ENCODE measurements at regions of chr1 and their contacts with region 1.

Region 1: GRCh38 chr1:212782422-212783154 is 9.0 kb downstream of the NSL1 start:
- DNase-seq: no peak
- H3K4me3 ChIP-seq: no peak overlapping the region
- H3K27ac ChIP-seq: no peak overlapping the region
- H3K4me1 ChIP-seq: no peaks in the 10 kb centered on the region
- H3K27me3 ChIP-seq: no peaks in the 10 kb centered on the region
- CTCF ChIP-seq: peak; percentile 33 to 61 (median 51)

Region 2: GRCh38 chr1:212477014-212477679 is 305.4 kb before region 1 on chr1:
- intact Hi-C with region 1: loop called (anchors 5 kb)
- DNase-seq: peak; percentile 45 to 92
- H3K4me3 ChIP-seq: no peak overlapping the region
- H3K27ac ChIP-seq: no peak overlapping the region
- H3K4me1 ChIP-seq: peaks cover 0 to 15% of the 10 kb centered on the region in 2 donors
- H3K27me3 ChIP-seq: no peaks in the 10 kb centered on the region
- CTCF ChIP-seq: peak; percentile 80 to 89 (median 83)

Region 3: DNA sequence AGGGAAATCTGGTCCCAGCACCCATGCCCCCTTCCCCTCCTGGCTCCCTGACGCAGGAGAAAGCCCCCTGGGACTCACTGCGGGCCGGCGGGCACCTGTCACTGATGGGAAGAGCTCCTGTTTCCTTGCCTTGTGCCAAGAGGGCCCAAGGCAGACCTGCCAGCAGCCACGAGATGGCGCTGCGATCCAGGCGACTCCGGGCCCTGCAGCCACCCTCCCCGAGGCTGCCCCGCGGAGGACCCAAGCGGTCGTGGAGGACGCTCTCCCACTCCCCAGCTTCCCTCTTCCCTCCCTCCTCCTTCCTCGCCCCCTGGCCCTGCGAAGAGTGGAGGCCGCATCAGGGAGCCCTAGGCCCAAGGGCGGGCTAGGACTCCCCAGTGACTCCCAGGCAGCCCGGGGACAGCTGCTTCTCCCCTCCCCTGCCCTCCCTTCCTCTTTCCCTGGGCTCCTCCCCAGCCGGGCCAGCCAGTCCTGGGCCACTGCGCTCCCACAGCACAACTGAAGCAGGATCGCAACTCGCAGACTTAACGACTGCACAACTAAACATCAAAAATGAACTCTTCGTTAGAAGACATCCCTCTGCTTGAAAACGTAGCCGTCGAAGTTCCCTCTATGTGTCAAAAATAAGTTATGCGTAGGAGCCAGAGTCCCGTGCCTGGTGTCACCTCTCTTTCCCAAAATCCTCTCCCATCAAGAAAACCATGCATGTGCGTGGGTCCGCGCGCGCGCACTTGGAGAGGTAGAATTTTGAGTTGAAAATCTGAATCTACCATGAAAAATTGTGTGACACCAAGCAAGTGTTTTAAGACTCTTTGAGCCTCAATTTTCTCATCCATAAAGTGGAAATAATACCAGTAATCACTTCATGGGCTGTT is 117.1 kb before region 1 on chr1:
- intact Hi-C with region 1: loop called (anchors 1 kb)
- DNase-seq: peak; percentile 42 to 88
- H3K4me3 ChIP-seq: peak overlapping the region; percentile 64 to 71
- H3K27ac ChIP-seq: peak overlapping the region; percentile 48 to 55
- H3K4me1 ChIP-seq: peaks cover 0 to 9% of the 10 kb centered on the region in 2 donors
- H3K27me3 ChIP-seq: no peaks in the 10 kb centered on the region
- CTCF ChIP-seq: peak; percentile 92 to 98 (median 94)

Region 4: DNA sequence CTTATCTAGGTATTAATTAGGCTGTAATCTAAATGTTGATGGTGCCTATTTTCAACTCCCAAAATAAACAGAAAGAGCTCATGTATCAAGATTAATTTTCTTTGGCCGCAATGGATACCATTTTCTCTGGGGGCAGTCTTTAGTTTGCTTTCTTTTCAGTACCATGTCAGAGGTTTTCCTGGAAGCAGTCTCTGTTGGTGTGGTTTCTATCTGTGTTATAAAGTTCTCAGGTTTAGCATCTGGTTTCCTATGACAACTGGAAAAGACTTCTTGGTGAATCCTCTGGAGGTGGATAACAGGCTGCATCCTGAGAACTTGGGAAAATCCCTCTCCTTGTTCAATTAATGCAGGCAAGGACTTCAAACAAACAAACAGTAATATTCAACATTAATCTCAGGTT is 44.3 kb before region 1 on chr1:
- intact Hi-C with region 1: no loop called
- DNase-seq: no peak
- H3K4me3 ChIP-seq: no peak overlapping the region
- H3K27ac ChIP-seq: no peak overlapping the region
- H3K4me1 ChIP-seq: no peaks in the 10 kb centered on the region
- H3K27me3 ChIP-seq: no peaks in the 10 kb centered on the region
- CTCF ChIP-seq: no peak